Breast epithelium (tissue), 4 donors: ENCODE measurements at regions of chr4 and their contacts with region 1.

Region 1: DNA sequence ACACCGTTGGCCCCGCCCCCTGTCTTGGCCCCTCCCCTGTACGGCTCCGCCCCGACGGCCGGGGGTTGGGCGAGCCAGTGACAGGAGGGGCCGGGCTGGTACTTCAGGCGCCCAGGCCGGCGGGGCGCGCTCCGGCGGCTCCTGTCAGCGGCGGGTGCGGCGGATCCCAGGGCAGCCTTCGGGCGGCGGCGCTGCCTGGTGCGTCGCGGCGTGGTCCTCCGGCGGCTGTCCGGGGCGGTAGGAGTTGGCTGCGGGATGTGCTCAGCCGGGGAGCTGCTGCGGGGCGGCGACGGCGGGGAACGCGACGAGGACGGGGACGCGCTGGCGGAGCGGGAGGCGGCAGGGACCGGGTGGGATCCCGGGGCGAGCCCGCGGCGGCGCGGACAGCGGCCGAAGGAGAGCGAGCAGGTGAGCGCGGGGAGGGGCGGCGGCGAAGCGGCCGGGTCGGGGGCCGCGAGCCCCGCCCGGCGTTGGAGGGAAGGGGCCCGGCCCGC is at the start of gene FAM241A:
- DNase-seq: peak; percentile 83 to 84
- H3K4me3 ChIP-seq: peak within 1 kb of the TSS; percentile 77 to 93 (median 85)
- H3K27ac ChIP-seq: peak within 1 kb of the TSS; percentile 88 to 90
- H3K4me1 ChIP-seq: peaks cover 0 to 6% of the 10 kb centered on the region in 2 donors
- H3K27me3 ChIP-seq: no peaks in the 10 kb centered on the region
- CTCF ChIP-seq: no peak
- POLR2A ChIP-seq: no peak
- total RNA-seq, gene FAM241A: 4.3 to 11.5 (median 7.5) TPM

Region 2: GRCh38 chr4:113773014-113773413 is 1627.6 kb after region 1 on chr4:
- intact Hi-C with region 1: loop called (anchors 5 kb)
- DNase-seq: no peak
- H3K4me3 ChIP-seq: no peak overlapping the region
- H3K27ac ChIP-seq: no peak overlapping the region
- H3K4me1 ChIP-seq: no peaks in the 10 kb centered on the region
- H3K27me3 ChIP-seq: no peaks in the 10 kb centered on the region
- CTCF ChIP-seq: no peak
- POLR2A ChIP-seq: no peak